Naive thymus-derived CD4-positive, alpha-beta T cell (primary cell): ENCODE measurements at regions of chr7 and their contacts with region 1.

Region 1: DNA sequence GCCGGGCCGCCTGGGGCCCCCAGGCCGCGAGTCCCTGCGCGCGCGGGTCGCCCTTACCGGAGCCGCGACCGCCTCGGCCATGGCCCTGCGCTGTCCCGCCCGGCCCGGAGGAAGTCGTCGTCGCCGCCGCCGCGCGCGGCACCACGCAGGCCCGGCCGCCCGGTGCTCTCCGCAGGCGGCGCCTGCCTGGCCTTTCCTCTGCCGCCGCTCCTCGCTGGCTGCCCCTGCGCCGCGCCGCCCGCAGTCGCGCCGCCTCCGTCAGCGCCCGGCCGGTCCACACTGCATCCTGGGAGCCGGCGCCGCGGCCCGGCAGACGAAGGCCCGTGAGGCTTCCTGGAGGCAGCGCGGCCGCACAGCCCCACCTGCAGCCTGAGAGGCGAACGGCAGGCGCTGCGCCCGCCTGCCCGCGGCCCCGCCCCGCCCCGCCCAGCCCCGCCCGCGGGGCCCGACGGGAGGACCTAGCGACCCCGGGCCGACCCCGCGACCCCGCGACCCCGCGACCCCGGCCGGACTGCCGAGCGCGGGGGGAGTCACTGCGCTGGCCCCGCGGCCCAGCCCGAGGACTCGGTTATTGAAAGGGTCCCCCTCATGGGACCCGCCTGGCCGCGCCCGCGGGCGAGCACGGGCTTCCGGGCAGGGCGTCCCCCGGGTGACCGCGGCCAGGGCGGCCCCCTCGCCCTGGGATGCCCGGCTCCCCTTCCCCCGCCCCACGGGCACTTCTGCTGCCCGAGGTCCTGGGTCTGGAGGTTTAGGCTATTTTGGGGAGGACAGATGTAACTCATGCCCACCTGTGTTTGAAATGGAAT is at the start of gene ZNF746:
- DNase-seq: peak; percentile 57 to 85 (median 76)
- ATAC-seq: peak; percentile 96
- H3K4me3 ChIP-seq: peak within 1 kb of the TSS; percentile 67
- H3K4me3 Mint-ChIP-seq: peak within 1 kb of the TSS; percentile 92 to 99 (median 96)
- H3K27ac ChIP-seq: peak within 1 kb of the TSS; percentile 82
- H3K27ac Mint-ChIP-seq: peak within 1 kb of the TSS; percentile 84 to 97 (median 95)
- H3K4me1 ChIP-seq: peaks cover 19 to 27% of the 10 kb centered on the region in 2 donors
- H3K4me1 Mint-ChIP-seq: peaks cover 21 to 46% (median 30%) of the 10 kb centered on the region in 7 donors
- H3K27me3 ChIP-seq: no peaks in the 10 kb centered on the region
- H3K27me3 Mint-ChIP-seq: peaks cover 0 to 3% (median 0%) of the 10 kb centered on the region in 5 donors
- total RNA-seq, gene ZNF746: 23.6 to 32.0 (median 24.4) TPM

Region 2: GRCh38 chr7:149005241-149006050 is 492.2 kb before region 1 on chr7:
- CTCF ChIA-PET with region 1: no interaction called
- POLR2A ChIA-PET with region 1: interaction called, 3 read pairs
- intact Hi-C with region 1: loop called in 1 of 2 experiments (anchors 1 kb)
- DNase-seq: peak; percentile 57 to 80 (median 73)
- ATAC-seq: peak; percentile 96
- H3K4me3 ChIP-seq: no peak overlapping the region
- H3K4me3 Mint-ChIP-seq: no peak overlapping the region
- H3K27ac ChIP-seq: no peak overlapping the region
- H3K27ac Mint-ChIP-seq: peak overlapping the region in 5 of 9 donors; percentile 65 to 90 (median 74)
- H3K4me1 ChIP-seq: no peaks in the 10 kb centered on the region
- H3K4me1 Mint-ChIP-seq: peaks cover 0 to 9% (median 5%) of the 10 kb centered on the region in 7 donors
- H3K27me3 ChIP-seq: no peaks in the 10 kb centered on the region
- H3K27me3 Mint-ChIP-seq: no peaks in the 10 kb centered on the region

Region 3: GRCh38 chr7:149209518-149210269 is 288.0 kb before region 1 on chr7:
- CTCF ChIA-PET with region 1: no interaction called
- POLR2A ChIA-PET with region 1: no interaction called
- intact Hi-C with region 1: loop called (anchors 1 kb)
- DNase-seq: peak; percentile 18 to 74 (median 48)
- ATAC-seq: peak; percentile 73
- H3K4me3 ChIP-seq: no peak overlapping the region
- H3K4me3 Mint-ChIP-seq: peak overlapping the region in 1 of 10 donors; percentile 60
- H3K27ac ChIP-seq: no peak overlapping the region
- H3K27ac Mint-ChIP-seq: peak overlapping the region in 3 of 9 donors; percentile 6 to 79 (median 72)
- H3K4me1 ChIP-seq: no peaks in the 10 kb centered on the region
- H3K4me1 Mint-ChIP-seq: peaks cover 0 to 21% (median 5%) of the 10 kb centered on the region in 7 donors
- H3K27me3 ChIP-seq: no peaks in the 10 kb centered on the region
- H3K27me3 Mint-ChIP-seq: no peaks in the 10 kb centered on the region

Region 4: GRCh38 chr7:149261829-149262617 is 235.6 kb before region 1 on chr7 and contains the start of gene ZNF783:
- CTCF ChIA-PET with region 1: interaction called, 4 read pairs
- POLR2A ChIA-PET with region 1: no interaction called
- intact Hi-C with region 1: loop called (anchors 1 kb)
- DNase-seq: peak; percentile 77 to 88 (median 86)
- ATAC-seq: peak; percentile 97
- H3K4me3 ChIP-seq: peak within 1 kb of the TSS; percentile 74
- H3K4me3 Mint-ChIP-seq: peak within 1 kb of the TSS; percentile 83 to 91 (median 88)
- H3K27ac ChIP-seq: peak within 1 kb of the TSS; percentile 71
- H3K27ac Mint-ChIP-seq: peak within 1 kb of the TSS; percentile 84 to 93 (median 90)
- H3K4me1 ChIP-seq: peaks cover 19 to 20% of the 10 kb centered on the region in 2 donors
- H3K4me1 Mint-ChIP-seq: peaks cover 22 to 46% (median 32%) of the 10 kb centered on the region in 7 donors
- H3K27me3 ChIP-seq: no peaks in the 10 kb centered on the region
- H3K27me3 Mint-ChIP-seq: no peaks in the 10 kb centered on the region
- total RNA-seq, gene ZNF783: 23.3 to 49.2 (median 36.0) TPM

Region 5: GRCh38 chr7:149422129-149422913 is 75.3 kb before region 1 on chr7:
- CTCF ChIA-PET with region 1: no interaction called
- POLR2A ChIA-PET with region 1: no interaction called
- intact Hi-C with region 1: loop called (anchors 1 kb)
- DNase-seq: peak; percentile 25 to 85 (median 75)
- ATAC-seq: peak; percentile 99
- H3K4me3 ChIP-seq: peak overlapping the region; percentile 75
- H3K4me3 Mint-ChIP-seq: peak overlapping the region; percentile 69 to 80 (median 76)
- H3K27ac ChIP-seq: peak overlapping the region; percentile 77
- H3K27ac Mint-ChIP-seq: peak overlapping the region in 8 of 9 donors; percentile 68 to 84 (median 81)
- H3K4me1 ChIP-seq: no peaks in the 10 kb centered on the region
- H3K4me1 Mint-ChIP-seq: peaks cover 0 to 17% (median 7%) of the 10 kb centered on the region in 7 donors
- H3K27me3 ChIP-seq: no peaks in the 10 kb centered on the region
- H3K27me3 Mint-ChIP-seq: peaks cover 0 to 14% (median 0%) of the 10 kb centered on the region in 5 donors

Region 6: DNA sequence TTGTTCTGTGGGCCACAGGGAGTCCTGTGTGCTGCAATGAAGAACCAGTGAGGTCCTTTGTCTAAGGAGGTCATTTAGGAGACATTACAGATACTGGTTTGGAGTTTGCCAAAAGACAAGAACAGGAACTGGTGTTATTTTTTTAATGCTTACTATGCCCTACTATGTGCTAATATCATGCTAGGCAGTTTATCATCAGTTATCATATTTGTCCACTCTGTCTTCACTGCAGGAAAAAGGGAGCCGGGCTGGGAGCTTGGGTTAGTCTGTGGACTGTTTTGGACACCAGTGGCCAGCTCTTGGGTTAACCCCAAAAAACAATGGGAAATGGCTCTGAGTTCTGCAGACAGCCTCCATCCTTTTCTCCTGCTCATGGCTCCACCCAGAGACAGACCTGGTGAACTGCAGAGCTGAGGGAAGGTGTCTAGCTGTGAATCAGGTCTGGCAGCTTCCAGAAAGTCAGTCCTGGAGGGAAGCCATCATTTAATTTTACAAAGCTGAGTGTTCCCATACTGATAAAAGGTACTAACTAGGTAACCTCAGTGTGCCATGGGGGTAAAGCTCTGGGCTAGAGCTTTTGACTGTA is 101.2 kb after region 1 on chr7:
- CTCF ChIA-PET with region 1: no interaction called
- POLR2A ChIA-PET with region 1: no interaction called
- intact Hi-C with region 1: loop called in 1 of 2 experiments (anchors 1 kb)
- DNase-seq: peak in 1 of 9 donors; percentile 30
- ATAC-seq: no peak
- H3K4me3 ChIP-seq: no peak overlapping the region
- H3K4me3 Mint-ChIP-seq: peak overlapping the region in 7 of 10 donors; percentile 18 to 84 (median 77)
- H3K27ac ChIP-seq: no peak overlapping the region
- H3K27ac Mint-ChIP-seq: peak overlapping the region in 7 of 9 donors; percentile 78 to 94 (median 88)
- H3K4me1 ChIP-seq: peaks cover 18 to 22% of the 10 kb centered on the region in 2 donors
- H3K4me1 Mint-ChIP-seq: peaks cover 30 to 50% (median 42%) of the 10 kb centered on the region in 7 donors
- H3K27me3 ChIP-seq: no peaks in the 10 kb centered on the region
- H3K27me3 Mint-ChIP-seq: peaks cover 0 to 9% (median 0%) of the 10 kb centered on the region in 5 donors